Mammary epithelial cell (primary cell): ENCODE measurements at regions of chr11 and their contacts with region 1.

Region 1: GRCh38 chr11:27201454-27202236 is 161.0 kb downstream of the BBOX1 start:
- DNase-seq: peak; percentile 60
- H3K4me3 ChIP-seq: no peak overlapping the region
- H3K27ac ChIP-seq: no peak overlapping the region
- H3K4me1 ChIP-seq: no peaks in the 10 kb centered on the region
- H3K27me3 ChIP-seq: no peaks in the 10 kb centered on the region
- CTCF ChIP-seq: no peak

Region 2: DNA sequence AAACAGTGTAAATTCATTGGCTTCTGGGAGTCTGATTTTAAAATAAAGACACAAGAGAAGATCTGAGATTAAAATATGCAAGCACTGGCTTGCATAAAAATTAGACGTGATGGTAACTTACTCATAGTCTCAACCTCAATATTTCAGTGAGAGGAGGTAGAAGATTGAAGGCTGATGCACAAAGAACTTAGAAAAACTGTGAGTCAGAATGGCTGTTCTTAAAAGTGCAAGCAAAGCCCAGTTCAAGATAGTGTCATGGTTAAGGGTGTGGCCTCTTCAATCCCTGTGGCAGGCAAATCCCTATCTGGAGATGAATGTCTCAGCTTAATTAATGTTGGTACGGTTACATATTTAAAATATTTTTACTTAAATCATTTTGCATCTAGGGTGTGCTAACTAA is 241.4 kb before region 1 on chr11:
- CTCF ChIA-PET with region 1: no interaction called
- dilution Hi-C with region 1: no loop called
- in situ Hi-C with region 1: no loop called
- intact Hi-C with region 1: no loop called
- DNase-seq: peak; percentile 95
- H3K4me3 ChIP-seq: no peak overlapping the region
- H3K27ac ChIP-seq: peak overlapping the region; percentile 23
- H3K4me1 ChIP-seq: peaks cover 9% of the 10 kb centered on the region
- H3K27me3 ChIP-seq: no peaks in the 10 kb centered on the region
- CTCF ChIP-seq: no peak

Region 3: GRCh38 chr11:27362749-27363575 is 161.3 kb after region 1 on chr11 and contains the start of gene CCDC34:
- CTCF ChIA-PET with region 1: no interaction called
- dilution Hi-C with region 1: no loop called
- in situ Hi-C with region 1: no loop called
- intact Hi-C with region 1: loop called (anchors 2 kb)
- DNase-seq: peak; percentile 92
- H3K4me3 ChIP-seq: peak within 1 kb of the TSS; percentile 63 to 87 (median 83)
- H3K27ac ChIP-seq: peak within 1 kb of the TSS; percentile 78
- H3K4me1 ChIP-seq: peaks cover 17% of the 10 kb centered on the region
- H3K27me3 ChIP-seq: no peaks in the 10 kb centered on the region
- CTCF ChIP-seq: no peak
- total RNA-seq, gene CCDC34: 2.5 to 10.4 TPM

Region 4: DNA sequence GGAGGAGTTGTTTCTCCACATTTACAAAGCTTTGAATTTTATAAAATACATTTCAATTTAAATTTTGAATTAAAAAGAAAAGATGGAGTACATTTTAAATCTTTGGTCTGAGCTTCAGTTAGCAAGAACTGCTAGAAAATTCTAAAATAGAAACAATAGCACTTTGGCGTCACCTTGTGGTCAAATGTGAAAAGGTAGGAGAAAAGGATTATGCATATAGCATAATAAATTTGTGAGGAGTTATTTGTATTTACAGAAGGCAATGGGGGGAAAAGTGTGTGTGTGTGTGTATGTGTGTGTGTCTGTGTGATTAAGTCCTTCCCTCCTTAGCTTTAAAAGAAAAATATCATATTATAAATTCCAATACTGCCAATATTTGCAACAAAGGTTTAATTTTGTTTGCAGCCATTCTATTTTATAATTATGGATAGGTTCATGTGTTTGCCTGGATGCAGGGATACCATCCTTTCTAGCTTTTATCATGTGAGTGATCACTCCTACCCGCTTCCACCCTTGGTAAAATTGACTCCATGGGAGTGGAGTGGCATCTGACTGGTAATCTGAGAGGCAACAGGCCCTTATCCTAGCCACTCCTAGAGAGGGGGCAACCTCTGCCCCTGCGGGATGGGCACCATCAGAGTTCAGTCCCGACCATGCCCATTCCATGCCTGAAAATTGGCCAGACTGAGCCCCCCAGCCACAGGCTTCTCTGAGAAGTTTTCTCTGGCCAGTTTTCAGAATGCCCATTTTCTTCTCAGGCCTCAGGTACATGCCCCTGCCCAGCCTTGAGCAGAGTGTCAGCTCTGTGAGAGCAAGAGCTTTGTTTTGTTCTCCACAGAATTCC is 284.5 kb after region 1 on chr11:
- CTCF ChIA-PET with region 1: no interaction called
- dilution Hi-C with region 1: loop called (anchors 25 kb)
- in situ Hi-C with region 1: no loop called
- intact Hi-C with region 1: loop called (anchors 5 kb)
- DNase-seq: peak; percentile 42
- H3K4me3 ChIP-seq: no peak overlapping the region
- H3K27ac ChIP-seq: no peak overlapping the region
- H3K4me1 ChIP-seq: no peaks in the 10 kb centered on the region
- H3K27me3 ChIP-seq: no peaks in the 10 kb centered on the region
- CTCF ChIP-seq: peak; percentile 92 to 94